Naive thymus-derived CD4-positive, alpha-beta T cell (primary cell): ENCODE measurements at regions of chr5 and their contacts with region 1.

Region 1: DNA sequence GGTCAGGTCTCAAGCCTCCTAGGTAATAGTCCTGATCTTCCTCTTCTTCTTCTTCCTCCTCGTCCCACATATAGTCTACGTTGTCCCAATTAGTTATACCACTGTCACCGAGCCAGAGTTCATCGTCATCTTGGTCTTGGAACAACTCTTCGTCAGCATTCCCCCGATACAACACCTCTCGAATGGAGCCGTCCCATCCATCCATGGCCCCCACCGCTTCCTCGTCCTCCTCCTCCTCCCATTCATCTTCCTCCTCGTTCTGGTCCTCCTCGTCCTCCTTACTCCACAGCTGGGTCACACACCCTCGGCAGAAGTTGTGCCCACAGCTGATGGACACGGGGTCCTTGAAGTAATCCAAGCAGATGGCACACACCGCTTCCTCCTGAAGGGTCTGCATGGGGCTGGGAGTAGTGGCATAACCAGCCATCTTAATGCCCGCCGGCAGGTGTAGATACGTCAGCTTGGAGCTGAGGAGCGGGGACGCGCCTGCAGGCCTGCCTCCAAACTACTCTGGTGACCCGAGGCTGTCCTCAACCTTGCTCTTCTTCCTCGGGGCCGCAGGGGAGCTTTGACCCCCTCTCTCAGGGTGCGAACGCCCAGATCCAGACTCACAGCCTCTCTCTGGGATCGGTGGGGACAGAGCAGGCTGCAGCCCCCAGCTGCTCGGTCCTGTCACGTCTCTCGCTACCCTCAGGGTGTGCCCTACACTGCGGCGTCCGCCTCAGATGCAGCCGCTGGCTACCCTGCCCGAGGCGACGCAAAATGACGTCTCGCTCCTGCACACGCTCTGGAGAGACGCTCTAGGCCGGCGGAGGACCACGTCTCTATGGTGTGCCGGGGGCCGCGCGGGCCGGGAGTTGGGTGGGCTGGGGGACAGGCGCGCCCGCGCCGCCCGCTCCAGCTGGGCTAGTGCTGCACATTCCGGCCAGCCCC is at the start of gene TRIM52:
- DNase-seq: peak; percentile 79 to 91 (median 90)
- ATAC-seq: peak; percentile 93
- H3K4me3 ChIP-seq: peak within 1 kb of the TSS; percentile 93
- H3K4me3 Mint-ChIP-seq: peak within 1 kb of the TSS; percentile 94 to 100 (median 98)
- H3K27ac ChIP-seq: peak within 1 kb of the TSS; percentile 97
- H3K27ac Mint-ChIP-seq: peak within 1 kb of the TSS; percentile 95 to 99 (median 98)
- H3K4me1 ChIP-seq: peaks cover 31 to 39% of the 10 kb centered on the region in 2 donors
- H3K4me1 Mint-ChIP-seq: peaks cover 34 to 60% (median 56%) of the 10 kb centered on the region in 7 donors
- H3K27me3 ChIP-seq: no peaks in the 10 kb centered on the region
- H3K27me3 Mint-ChIP-seq: no peaks in the 10 kb centered on the region
- total RNA-seq, gene TRIM52: 31.4 to 71.6 (median 35.7) TPM

Region 2: DNA sequence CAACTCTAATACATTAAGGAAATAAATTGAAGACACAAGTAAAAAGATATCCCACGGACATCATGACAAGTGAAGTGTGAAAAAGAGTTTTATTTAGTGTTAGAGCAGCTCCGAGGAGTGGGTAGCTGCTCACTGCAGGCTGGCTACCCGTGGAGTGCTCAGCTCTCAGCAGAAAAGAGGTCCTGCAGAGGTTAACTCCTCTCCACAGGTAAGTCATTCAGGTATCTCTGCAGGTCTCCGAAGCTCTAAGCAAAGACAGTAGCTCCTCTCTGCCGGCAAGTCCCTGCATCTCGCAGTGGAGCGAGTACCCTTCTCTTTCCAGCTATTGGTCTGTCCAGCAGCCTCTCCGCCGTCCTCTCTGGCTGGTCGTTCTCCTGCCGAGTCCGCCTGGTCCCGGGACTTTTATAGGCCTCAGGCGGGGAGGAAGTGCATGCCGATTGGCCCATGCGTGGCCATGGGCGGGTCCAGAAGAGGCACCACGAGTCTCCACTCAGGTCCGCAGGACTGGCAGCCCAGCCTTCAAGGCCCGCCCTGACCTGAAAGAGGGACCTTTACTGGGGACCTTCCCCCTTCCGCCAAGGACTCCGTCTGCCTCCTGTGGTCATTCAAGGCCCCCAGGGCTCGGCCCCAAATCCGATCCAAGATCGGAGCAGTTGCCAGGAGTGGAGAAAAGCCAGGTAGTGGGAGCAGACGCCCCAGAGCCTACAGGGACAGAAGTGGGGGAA is 190.7 kb before region 1 on chr5:
- CTCF ChIA-PET with region 1: no interaction called
- POLR2A ChIA-PET with region 1: no interaction called
- intact Hi-C with region 1: no loop called
- DNase-seq: no peak
- ATAC-seq: no peak
- H3K4me3 ChIP-seq: no peak overlapping the region
- H3K4me3 Mint-ChIP-seq: peak overlapping the region in 4 of 10 donors; percentile 10 to 21 (median 20)
- H3K27ac ChIP-seq: no peak overlapping the region
- H3K27ac Mint-ChIP-seq: no peak overlapping the region
- H3K4me1 ChIP-seq: no peaks in the 10 kb centered on the region
- H3K4me1 Mint-ChIP-seq: peaks cover 0 to 8% (median 0%) of the 10 kb centered on the region in 7 donors
- H3K27me3 ChIP-seq: no peaks in the 10 kb centered on the region
- H3K27me3 Mint-ChIP-seq: peaks cover 37 to 83% (median 65%) of the 10 kb centered on the region in 5 donors

Region 3: DNA sequence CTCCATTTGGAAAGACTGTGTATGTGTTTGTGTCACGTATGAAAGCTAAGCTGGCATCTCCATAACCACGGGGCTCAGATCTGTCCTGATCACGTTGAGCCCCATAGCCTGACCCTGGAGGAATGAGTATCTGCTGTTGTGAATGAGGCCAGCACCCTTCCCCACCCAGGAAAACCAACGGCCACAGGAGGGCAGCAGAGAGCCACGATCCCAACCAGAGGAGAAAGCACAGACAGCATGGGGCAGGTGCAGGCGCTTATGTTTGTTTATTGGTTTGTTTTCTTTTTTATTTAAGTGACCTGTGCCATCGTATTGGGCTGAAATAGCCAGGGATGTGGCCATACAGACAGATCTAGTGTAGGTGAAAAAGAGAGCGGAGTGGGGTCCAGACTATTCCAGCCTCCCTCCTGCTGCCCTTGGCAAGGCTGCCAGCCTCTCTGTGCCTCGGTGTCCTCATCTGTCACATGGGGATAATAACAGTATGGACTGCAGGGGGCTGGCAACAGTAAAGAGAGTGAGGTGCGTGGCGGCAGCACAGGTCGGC is 101.3 kb before region 1 on chr5:
- CTCF ChIA-PET with region 1: interaction called, 3 read pairs
- POLR2A ChIA-PET with region 1: interaction called, 7 read pairs
- intact Hi-C with region 1: loop called in 1 of 2 experiments (anchors 1 kb)
- DNase-seq: peak; percentile 79 to 95 (median 87)
- ATAC-seq: peak; percentile 80
- H3K4me3 ChIP-seq: no peak overlapping the region
- H3K4me3 Mint-ChIP-seq: peak overlapping the region; percentile 57 to 83 (median 72)
- H3K27ac ChIP-seq: peak overlapping the region; percentile 89
- H3K27ac Mint-ChIP-seq: peak overlapping the region; percentile 73 to 97 (median 94)
- H3K4me1 ChIP-seq: peaks cover 15 to 19% of the 10 kb centered on the region in 2 donors
- H3K4me1 Mint-ChIP-seq: peaks cover 13 to 33% (median 27%) of the 10 kb centered on the region in 7 donors
- H3K27me3 ChIP-seq: no peaks in the 10 kb centered on the region
- H3K27me3 Mint-ChIP-seq: peaks cover 0 to 29% (median 17%) of the 10 kb centered on the region in 5 donors

Region 4: DNA sequence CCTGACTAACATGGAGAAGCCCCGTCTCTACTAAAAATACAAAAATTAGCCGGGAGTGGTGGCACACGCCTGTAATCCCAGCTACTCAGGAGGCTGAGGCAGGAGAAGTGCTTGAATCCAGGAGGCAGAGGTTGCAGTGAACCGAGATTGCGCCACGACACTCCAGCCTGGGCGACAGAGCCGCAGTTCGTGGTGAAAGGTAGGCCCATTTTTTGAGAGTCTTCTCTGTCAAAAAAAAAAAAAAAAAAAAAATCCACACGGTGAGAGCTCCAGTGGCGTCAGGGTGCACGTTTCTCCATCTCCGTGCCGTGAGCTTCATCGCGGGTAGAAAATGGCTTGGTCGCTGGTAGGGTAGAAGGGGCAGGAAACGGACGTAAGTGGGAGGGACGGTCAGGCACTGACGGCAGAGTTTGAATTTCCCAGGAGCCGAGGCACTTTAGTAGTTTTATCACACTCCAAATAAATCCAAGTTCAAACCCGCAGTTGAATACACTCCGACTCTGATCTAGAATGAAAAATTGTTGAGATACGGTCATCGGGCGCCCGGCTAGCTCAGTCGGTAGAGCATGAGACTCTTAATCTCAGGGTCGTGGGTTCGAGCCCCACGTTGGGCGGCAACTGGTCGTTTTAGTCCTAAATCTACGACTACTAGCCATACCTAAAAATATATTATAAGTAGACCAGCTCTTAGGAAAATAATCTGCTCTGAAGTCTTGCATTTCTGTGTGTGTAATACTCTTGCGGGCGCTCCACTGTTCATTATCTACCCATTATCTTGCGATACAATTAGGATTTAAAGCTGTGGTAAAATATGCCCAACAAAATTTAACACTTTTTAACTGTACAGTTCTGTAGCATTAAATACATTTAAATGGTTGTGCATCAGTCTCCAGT is 53.2 kb before region 1 on chr5:
- CTCF ChIA-PET with region 1: no interaction called
- POLR2A ChIA-PET with region 1: interaction called, 35 read pairs
- intact Hi-C with region 1: loop called in 1 of 2 experiments (anchors 1 kb)
- DNase-seq: peak; percentile 38 to 87 (median 78)
- ATAC-seq: peak; percentile 70
- H3K4me3 ChIP-seq: peak overlapping the region; percentile 67
- H3K4me3 Mint-ChIP-seq: peak overlapping the region; percentile 88 to 99 (median 94)
- H3K27ac ChIP-seq: peak overlapping the region; percentile 73
- H3K27ac Mint-ChIP-seq: peak overlapping the region; percentile 90 to 100 (median 98)
- H3K4me1 ChIP-seq: peaks cover 5 to 11% of the 10 kb centered on the region in 2 donors
- H3K4me1 Mint-ChIP-seq: peaks cover 21 to 45% (median 37%) of the 10 kb centered on the region in 7 donors
- H3K27me3 ChIP-seq: peaks cover 0 to 4% of the 10 kb centered on the region in 2 donors
- H3K27me3 Mint-ChIP-seq: peaks cover 0 to 36% (median 11%) of the 10 kb centered on the region in 5 donors

Region 5: DNA sequence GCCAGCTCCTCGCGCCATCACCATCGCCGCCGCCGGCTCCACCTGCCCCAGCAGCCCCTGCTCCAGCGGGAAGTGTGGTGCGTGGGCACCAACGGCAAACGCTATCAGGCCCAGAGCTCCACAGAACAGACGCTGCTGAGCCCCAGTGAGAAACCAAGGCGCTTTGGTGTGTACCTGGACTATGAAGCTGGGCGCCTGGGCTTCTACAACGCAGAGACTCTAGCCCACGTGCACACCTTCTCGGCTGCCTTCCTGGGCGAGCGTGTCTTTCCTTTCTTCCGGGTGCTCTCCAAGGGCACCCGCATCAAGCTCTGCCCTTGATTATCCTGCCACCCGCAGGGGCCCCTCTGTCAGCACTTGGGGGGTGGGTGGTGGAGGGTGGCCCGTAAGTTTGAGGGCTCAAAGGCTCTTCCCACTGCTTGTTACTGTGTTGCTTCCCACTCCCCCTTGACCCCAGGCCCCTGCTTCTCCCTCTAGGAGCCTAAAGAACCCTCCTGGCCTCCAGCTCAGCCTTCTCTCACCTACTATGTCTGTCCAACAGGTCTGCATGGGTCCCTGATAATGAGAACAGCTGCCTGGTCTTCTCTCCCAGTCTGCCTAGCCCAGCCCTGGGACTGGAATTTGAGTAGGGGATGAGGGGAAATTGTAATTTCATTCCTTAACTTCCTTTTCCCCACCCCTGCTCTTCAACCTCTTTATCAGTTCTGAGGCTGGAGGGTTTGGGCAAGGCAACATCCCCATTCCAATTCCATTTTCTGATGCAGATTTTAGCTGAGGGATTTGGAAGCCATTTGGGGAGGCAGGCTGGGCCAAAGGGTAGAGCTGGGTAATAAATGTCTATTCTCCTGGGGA is 26.0 kb before region 1 on chr5:
- CTCF ChIA-PET with region 1: no interaction called
- POLR2A ChIA-PET with region 1: interaction called, 12 read pairs
- intact Hi-C with region 1: no loop called
- DNase-seq: no peak
- ATAC-seq: no peak
- H3K4me3 ChIP-seq: no peak overlapping the region
- H3K4me3 Mint-ChIP-seq: no peak overlapping the region
- H3K27ac ChIP-seq: no peak overlapping the region
- H3K27ac Mint-ChIP-seq: peak overlapping the region in 6 of 9 donors; percentile 15 to 78 (median 23)
- H3K4me1 ChIP-seq: peaks cover 0 to 5% of the 10 kb centered on the region in 2 donors
- H3K4me1 Mint-ChIP-seq: peaks cover 15 to 44% (median 31%) of the 10 kb centered on the region in 7 donors
- H3K27me3 ChIP-seq: no peaks in the 10 kb centered on the region
- H3K27me3 Mint-ChIP-seq: no peaks in the 10 kb centered on the region

Region 6: DNA sequence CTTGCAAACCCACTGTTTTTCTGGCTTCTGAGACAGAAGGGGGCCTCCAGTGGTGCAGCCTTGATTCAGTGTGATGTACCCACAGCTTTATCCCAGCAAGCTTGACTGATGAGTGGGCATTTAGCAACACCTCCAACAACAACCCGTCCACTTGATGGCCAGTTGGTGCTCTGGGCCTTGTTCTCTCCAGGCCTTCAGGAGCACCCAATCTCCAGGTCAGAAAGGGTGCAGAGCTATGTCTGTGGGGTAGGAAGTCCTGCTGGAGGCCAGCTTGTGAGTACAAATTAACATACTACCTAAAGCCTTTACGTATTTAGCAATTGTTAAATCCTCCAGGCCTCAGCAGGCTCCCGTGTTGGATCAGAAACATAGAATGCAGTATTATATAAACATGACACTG is 10.4 kb after region 1 on chr5:
- CTCF ChIA-PET with region 1: no interaction called
- POLR2A ChIA-PET with region 1: no interaction called
- intact Hi-C with region 1: no loop called
- DNase-seq: no peak
- ATAC-seq: no peak
- H3K4me3 ChIP-seq: no peak overlapping the region
- H3K4me3 Mint-ChIP-seq: no peak overlapping the region
- H3K27ac ChIP-seq: no peak overlapping the region
- H3K27ac Mint-ChIP-seq: no peak overlapping the region
- H3K4me1 ChIP-seq: no peaks in the 10 kb centered on the region
- H3K4me1 Mint-ChIP-seq: peaks cover 0 to 3% (median 0%) of the 10 kb centered on the region in 7 donors
- H3K27me3 ChIP-seq: no peaks in the 10 kb centered on the region
- H3K27me3 Mint-ChIP-seq: no peaks in the 10 kb centered on the region